K562 (cell line): ENCODE measurements at regions of chr3 and their contacts with region 1.

Region 1: GRCh38 chr3:168156479-168156878 is 60.8 kb upstream of the GOLIM4 start:
- DNase-seq: no peak
- ATAC-seq: no peak
- H3K4me3 ChIP-seq: no peak overlapping the region
- H3K27ac ChIP-seq: peak overlapping the region; percentile 79
- H3K4me1 ChIP-seq: peaks cover 12 to 35% of the 10 kb centered on the region in 2 experiments
- H3K27me3 ChIP-seq: no peaks in the 10 kb centered on the region
- CTCF ChIP-seq: no peak
- EP300 ChIP-seq: no peak
- POLR2A ChIP-seq: no peak
- RAD21 ChIP-seq: no peak

Region 2: DNA sequence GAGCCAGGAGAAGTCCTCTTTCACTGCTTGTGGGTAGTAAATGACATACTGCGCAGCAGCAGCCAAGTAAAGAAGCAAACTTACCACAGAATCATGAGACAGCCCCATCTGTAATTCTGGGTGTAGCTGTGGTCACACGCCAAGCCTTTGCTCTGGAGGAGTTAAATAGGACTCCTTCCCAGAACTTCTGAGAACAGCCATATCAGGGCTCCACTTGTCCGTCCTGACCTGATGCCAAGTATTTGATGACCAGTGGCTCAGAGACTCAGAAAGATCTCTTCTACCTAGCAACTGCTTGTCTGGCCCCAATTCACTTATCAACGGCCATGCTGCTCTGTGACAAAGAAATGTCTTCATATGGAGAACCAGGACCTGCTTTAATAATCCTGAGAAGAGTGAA is 40.2 kb before region 1 on chr3:
- CTCF ChIA-PET with region 1: no interaction called
- POLR2A ChIA-PET with region 1: interaction called, 5 read pairs
- in situ Hi-C with region 1: no loop called
- intact Hi-C with region 1: loop called (anchors 1 kb)
- DNase-seq: peak; percentile 38 to 94 (median 65)
- ATAC-seq: peak; percentile 94
- H3K4me3 ChIP-seq: no peak overlapping the region; the same call in 1 of the 2 replicates
- H3K27ac ChIP-seq: peak overlapping the region; percentile 73
- H3K4me1 ChIP-seq: peaks cover 0 to 34% of the 10 kb centered on the region in 2 experiments; a peak in 3 of 5 replicates
- H3K27me3 ChIP-seq: no peaks in the 10 kb centered on the region
- CTCF ChIP-seq: peak in 1 of 3 experiments; percentile 5; a peak in 1 of 6 replicates
- EP300 ChIP-seq: peak; percentile 39; the same call in 1 of the 2 replicates
- POLR2A ChIP-seq: no peak
- RAD21 ChIP-seq: peak; percentile 25 to 28

Region 3: DNA sequence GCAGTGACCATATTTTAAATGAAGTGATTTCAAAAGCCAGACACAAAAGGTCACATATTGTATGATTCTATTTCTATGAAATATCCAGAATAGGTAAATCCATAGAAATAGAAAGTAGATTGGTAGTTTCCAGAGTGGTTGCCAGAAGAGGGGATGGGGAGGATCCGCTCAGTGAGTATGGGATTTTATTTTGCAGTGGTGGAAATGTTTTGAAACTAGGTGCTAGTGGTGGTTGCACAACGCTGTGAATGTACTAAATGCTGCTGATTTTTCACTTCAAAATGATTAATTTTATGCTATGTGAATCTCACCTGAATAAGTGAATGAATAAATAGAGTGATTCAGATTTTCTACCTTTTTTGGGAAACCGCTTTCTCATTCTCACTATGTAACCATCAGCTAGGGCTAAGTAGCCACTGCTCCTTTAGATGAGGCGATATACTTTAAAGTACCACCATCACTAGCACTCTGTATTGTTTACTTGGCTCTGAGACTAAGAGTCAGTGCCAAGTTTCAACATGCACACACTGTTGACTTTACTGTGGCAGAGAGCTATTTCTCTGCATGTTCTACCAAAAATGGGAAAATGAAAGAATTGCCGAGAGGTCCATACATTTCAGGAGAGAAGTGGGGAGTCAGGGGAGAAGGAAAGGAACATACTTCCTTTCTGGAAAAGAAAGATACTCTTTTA is 30.0 kb after region 1 on chr3:
- CTCF ChIA-PET with region 1: no interaction called
- POLR2A ChIA-PET with region 1: no interaction called
- in situ Hi-C with region 1: no loop called
- intact Hi-C with region 1: no loop called
- DNase-seq: no peak
- ATAC-seq: no peak
- H3K4me3 ChIP-seq: no peak overlapping the region
- H3K27ac ChIP-seq: no peak overlapping the region
- H3K4me1 ChIP-seq: no peaks in the 10 kb centered on the region
- H3K27me3 ChIP-seq: 0 out of 5 replicates have a peak, but pooled peaks cover 0 to 6% of the 10 kb centered on the region in 2 experiments
- CTCF ChIP-seq: no peak
- EP300 ChIP-seq: no peak
- POLR2A ChIP-seq: no peak
- RAD21 ChIP-seq: no peak